Left ventricle myocardium superior (tissue), 1 donor: ENCODE measurements at regions of chr2 and their contacts with region 1.

Region 1: GRCh38 chr2:212548450-212548819 is 9.8 kb upstream of the ERBB4 start:
- DNase-seq: no peak
- ATAC-seq: peak; percentile 78

Region 2: GRCh38 chr2:212005085-212005671 is 543.3 kb before region 1 on chr2:
- intact Hi-C with region 1: loop called (anchors 5 kb)
- DNase-seq: peak; percentile 38
- ATAC-seq: peak; percentile 62

Region 3: GRCh38 chr2:212147921-212148513 is 400.4 kb before region 1 on chr2:
- intact Hi-C with region 1: loop called (anchors 5 kb)
- DNase-seq: no peak
- ATAC-seq: no peak

Region 4: GRCh38 chr2:212723226-212723625 is 174.8 kb after region 1 on chr2:
- intact Hi-C with region 1: no loop called
- DNase-seq: no peak
- ATAC-seq: no peak